Activated T-helper 1 cell treated with anti-CD3 and anti-CD28 coated beads, Interleukin-12 subunit alpha, Interleukin-12 subunit beta, Interleukin-2, Interleukin-4 antibody, amounts not matched to agents 30 ng/mL and 10 ng/mL and 1 ng/mL, durations not matched to agents 14 hours and 24 hours and 36 hours (primary cell): ENCODE measurements at regions of chr2 and their contacts with region 1.

Region 1: GRCh38 chr2:179410552-179411356 is 146.1 kb upstream of the SESTD1 start:
- DNase-seq: no peak
- H3K4me3 Mint-ChIP-seq: no peak overlapping the region
- H3K27ac Mint-ChIP-seq: no peak overlapping the region
- H3K4me1 Mint-ChIP-seq: peaks cover 9% of the 10 kb centered on the region
- H3K27me3 Mint-ChIP-seq: peaks cover 17% of the 10 kb centered on the region

Region 2: DNA sequence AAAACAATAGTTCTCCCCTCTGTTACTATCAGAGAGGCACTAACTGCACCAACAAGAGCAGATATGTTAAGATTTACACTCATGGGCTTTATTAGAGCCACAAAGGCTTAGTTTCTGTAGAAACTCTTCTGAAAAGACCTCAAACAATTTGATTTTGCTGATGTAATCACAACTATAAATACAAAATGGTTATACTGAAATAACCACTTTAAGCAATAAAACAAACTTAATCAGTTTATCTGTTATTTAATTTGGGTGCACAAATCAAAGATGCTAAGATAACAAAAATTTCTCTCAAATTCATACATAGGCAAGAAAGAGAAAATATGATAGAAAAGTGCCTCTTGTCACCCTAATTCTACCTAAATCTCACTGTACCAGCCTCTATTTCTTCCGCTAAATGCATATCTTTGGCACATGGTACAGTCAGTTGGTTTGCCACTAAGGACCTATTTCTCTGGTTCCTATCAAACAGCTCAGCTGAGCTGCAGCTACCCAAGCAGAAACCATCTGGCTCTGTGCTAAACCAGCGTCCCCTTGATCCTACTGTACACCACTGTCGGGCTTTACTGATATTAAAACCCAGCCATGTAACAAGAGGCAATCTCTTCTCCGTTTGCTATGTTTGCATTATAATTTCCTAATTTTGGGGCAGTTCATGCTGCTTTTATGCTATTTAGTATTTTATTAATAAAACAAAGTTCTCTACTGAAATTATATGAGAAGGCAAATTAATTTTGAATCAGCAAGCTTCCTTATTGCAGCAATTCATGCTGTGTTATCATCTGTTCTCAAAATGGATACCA is 536.3 kb after region 1 on chr2:
- intact Hi-C with region 1: no loop called
- DNase-seq: no peak
- H3K4me3 Mint-ChIP-seq: no peak overlapping the region
- H3K27ac Mint-ChIP-seq: no peak overlapping the region
- H3K4me1 Mint-ChIP-seq: no peaks in the 10 kb centered on the region
- H3K27me3 Mint-ChIP-seq: no peaks in the 10 kb centered on the region

Region 3: GRCh38 chr2:180077295-180077906 is 666.6 kb after region 1 on chr2:
- intact Hi-C with region 1: loop called (anchors 5 kb)
- DNase-seq: no peak
- H3K4me3 Mint-ChIP-seq: no peak overlapping the region
- H3K27ac Mint-ChIP-seq: no peak overlapping the region
- H3K4me1 Mint-ChIP-seq: no peaks in the 10 kb centered on the region
- H3K27me3 Mint-ChIP-seq: peaks cover 2% of the 10 kb centered on the region